ENCODE measurements at regions of chr6 and their contacts with region 1.

Region 1: DNA sequence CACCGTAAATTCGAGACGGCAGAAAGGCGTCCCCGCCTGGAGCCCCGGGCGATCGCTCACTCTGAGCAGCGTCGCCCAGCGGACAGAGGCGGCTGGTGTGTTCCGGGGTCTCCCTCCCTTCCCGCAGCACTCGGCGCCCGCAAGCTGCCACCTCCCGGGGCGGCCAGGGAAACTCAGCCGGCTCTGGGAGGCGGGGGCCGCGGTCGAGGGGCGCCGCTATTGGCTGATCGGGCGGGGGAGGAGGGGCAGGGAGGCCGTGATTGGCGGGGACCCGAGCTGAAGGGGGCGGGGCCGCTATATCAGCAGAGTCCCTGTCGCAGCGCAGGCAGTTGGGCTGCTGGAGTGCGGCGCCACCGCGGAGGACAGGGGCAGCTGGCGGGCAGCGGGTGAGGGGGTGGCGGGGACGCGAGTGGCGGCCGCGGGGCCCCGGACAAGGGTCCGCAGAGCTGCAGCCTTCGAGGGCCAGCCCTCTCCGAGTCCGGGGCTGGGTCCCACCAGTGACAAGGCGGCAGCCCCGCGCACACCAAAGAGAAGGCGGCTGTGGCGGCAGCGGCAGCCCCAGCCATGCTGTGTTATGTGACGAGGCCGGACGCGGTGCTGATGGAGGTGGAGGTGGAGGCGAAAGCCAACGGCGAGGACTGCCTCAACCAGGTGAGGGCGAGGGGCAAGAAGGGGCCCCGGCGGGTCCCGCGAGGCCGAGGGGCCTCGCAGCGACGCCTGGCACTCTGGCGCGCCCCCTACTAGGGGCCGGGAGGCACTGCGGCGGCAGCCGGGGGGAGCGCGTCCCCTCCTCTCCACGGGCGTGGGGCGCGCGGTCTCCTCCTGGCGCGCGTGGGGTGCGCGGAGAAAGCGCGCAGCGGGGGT is at the start of gene MYLIP:
- DNase-seq: peak; percentile 96 to 99
- H3K4me3 ChIP-seq: peak within 1 kb of the TSS; percentile 84 to 90
- H3K27ac ChIP-seq: peak within 1 kb of the TSS; percentile 95 to 98
- H3K4me1 ChIP-seq: peaks cover 0 to 46% (median 24%) of the 10 kb centered on the region in 4 donors
- H3K27me3 ChIP-seq: no peaks in the 10 kb centered on the region
- CTCF ChIP-seq: peak; percentile 63 to 74

Region 2: GRCh38 chr6:16206595-16207037 is 77.6 kb after region 1 on chr6:
- intact Hi-C with region 1: loop called (anchors 2 kb)
- DNase-seq: peak in 1 of 2 donors; percentile 72
- H3K4me3 ChIP-seq: no peak overlapping the region
- H3K27ac ChIP-seq: peak overlapping the region; percentile 5 to 69
- H3K4me1 ChIP-seq: peaks cover 0 to 30% (median 12%) of the 10 kb centered on the region in 4 donors
- H3K27me3 ChIP-seq: no peaks in the 10 kb centered on the region
- CTCF ChIP-seq: peak; percentile 94 to 97

Region 3: DNA sequence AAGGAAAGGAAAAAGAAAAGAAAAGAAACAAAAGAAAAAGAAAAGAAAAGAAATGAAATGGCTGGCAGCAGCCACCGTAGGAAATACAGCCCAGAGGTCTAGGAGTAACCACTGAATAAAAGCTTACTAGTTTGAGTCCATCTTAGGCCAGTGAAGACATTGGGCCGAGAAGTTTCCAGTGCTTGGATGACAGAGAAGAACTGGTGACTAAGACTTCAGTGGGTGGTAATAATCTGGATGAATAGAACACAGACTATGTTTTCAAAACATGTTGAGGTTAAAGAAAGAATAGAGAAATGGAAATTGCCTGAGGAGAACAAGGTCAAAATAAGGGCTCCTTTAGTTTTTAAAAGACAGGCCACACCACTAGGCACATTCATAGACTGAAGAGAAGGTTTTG is 433.5 kb after region 1 on chr6:
- intact Hi-C with region 1: no loop called
- DNase-seq: no peak
- H3K4me3 ChIP-seq: no peak overlapping the region
- H3K27ac ChIP-seq: peak overlapping the region in 1 of 2 donors; percentile 10
- H3K4me1 ChIP-seq: peaks cover 0 to 42% (median 16%) of the 10 kb centered on the region in 4 donors
- H3K27me3 ChIP-seq: no peaks in the 10 kb centered on the region
- CTCF ChIP-seq: no peak

Measured in tibial artery (tissue), 4 donors.